Naive thymus-derived CD4-positive, alpha-beta T cell (primary cell): ENCODE measurements at regions of chr7 and their contacts with region 1.

Region 1: DNA sequence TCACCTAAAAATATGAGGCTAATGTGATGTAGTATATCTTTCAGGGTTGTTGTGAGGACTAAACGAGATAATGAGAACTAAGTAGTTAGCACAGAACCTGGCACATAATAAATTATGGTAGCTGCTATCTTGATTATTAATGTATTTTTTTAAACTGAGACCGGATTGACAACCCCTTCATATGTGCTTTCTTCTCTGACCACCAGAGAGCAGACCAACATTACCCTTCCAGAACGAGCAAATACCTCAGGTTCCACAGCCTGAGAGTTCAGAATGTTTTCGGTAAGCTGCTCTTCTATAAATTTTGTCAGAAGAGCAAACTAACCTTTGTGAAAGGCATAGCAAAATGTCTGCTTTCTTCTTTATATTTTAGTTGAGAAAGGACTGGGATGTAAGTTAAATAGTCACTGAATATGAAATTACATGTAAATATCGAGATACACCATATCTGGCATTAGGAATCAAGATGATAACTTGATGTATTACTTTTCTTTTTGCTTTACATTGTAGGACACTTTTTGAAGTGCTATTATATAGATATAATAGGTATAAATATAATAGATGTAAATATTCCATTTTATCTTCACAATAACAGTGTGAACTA is 13.6 kb upstream of the BPGM start:
- DNase-seq: peak in 7 of 9 donors; percentile 51 to 75 (median 64)
- ATAC-seq: peak; percentile 89
- H3K4me3 ChIP-seq: no peak overlapping the region
- H3K4me3 Mint-ChIP-seq: no peak overlapping the region
- H3K27ac ChIP-seq: no peak overlapping the region
- H3K27ac Mint-ChIP-seq: peak overlapping the region in 1 of 9 donors; percentile 1
- H3K4me1 ChIP-seq: peaks cover 12% of the 10 kb centered on the region in 2 donors
- H3K4me1 Mint-ChIP-seq: peaks cover 17 to 35% (median 23%) of the 10 kb centered on the region in 7 donors
- H3K27me3 ChIP-seq: peaks cover 0 to 5% of the 10 kb centered on the region in 2 donors
- H3K27me3 Mint-ChIP-seq: peaks cover 6 to 19% (median 12%) of the 10 kb centered on the region in 5 donors

Region 2: DNA sequence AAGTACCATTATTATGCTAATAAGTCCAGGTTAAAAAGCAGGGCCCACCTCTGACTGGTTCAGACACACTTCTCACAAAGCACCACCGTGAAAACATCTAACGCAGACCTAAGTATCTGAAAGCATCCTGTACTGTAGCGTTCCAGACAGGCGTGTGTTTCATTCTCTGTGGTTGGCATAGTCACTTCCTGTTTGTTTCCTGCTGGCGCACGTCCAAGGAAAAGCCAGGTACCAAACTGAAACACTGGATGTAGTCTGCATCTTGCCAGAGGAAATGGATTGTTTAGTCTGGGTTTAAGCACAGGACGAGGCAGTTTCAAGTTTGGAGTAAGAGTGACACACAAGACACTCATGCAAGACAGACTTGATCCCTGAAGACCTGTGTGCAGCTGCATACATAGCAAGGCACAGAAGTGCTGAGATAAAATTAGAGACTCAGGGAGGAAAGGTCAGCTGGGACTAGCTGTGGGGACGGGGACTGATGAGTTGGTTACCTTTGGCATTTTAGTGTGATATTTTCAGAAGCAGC is 36.9 kb after region 1 on chr7:
- CTCF ChIA-PET with region 1: interaction called, 10 read pairs
- POLR2A ChIA-PET with region 1: interaction called, 13 read pairs
- intact Hi-C with region 1: loop called (anchors 1 to 5 kb)
- DNase-seq: peak; percentile 41 to 95 (median 92)
- ATAC-seq: peak; percentile 98
- H3K4me3 ChIP-seq: peak overlapping the region; percentile 25
- H3K4me3 Mint-ChIP-seq: peak overlapping the region; percentile 58 to 88 (median 82)
- H3K27ac ChIP-seq: peak overlapping the region; percentile 84
- H3K27ac Mint-ChIP-seq: peak overlapping the region; percentile 79 to 100 (median 96)
- H3K4me1 ChIP-seq: peaks cover 13 to 38% of the 10 kb centered on the region in 2 donors
- H3K4me1 Mint-ChIP-seq: peaks cover 14 to 69% (median 63%) of the 10 kb centered on the region in 7 donors
- H3K27me3 ChIP-seq: no peaks in the 10 kb centered on the region
- H3K27me3 Mint-ChIP-seq: no peaks in the 10 kb centered on the region

Region 3: GRCh38 chr7:134701272-134701671 is 68.2 kb after region 1 on chr7:
- CTCF ChIA-PET with region 1: interaction called, 90 read pairs
- POLR2A ChIA-PET with region 1: interaction called, 8 read pairs
- intact Hi-C with region 1: loop called (anchors 1 kb)
- DNase-seq: peak in 6 of 9 donors; percentile 10 to 39 (median 23)
- ATAC-seq: peak; percentile 60
- H3K4me3 ChIP-seq: no peak overlapping the region
- H3K4me3 Mint-ChIP-seq: no peak overlapping the region
- H3K27ac ChIP-seq: no peak overlapping the region
- H3K27ac Mint-ChIP-seq: peak overlapping the region in 1 of 9 donors; percentile 25
- H3K4me1 ChIP-seq: no peaks in the 10 kb centered on the region
- H3K4me1 Mint-ChIP-seq: no peaks in the 10 kb centered on the region
- H3K27me3 ChIP-seq: no peaks in the 10 kb centered on the region
- H3K27me3 Mint-ChIP-seq: peaks cover 0 to 2% (median 0%) of the 10 kb centered on the region in 5 donors

Region 4: DNA sequence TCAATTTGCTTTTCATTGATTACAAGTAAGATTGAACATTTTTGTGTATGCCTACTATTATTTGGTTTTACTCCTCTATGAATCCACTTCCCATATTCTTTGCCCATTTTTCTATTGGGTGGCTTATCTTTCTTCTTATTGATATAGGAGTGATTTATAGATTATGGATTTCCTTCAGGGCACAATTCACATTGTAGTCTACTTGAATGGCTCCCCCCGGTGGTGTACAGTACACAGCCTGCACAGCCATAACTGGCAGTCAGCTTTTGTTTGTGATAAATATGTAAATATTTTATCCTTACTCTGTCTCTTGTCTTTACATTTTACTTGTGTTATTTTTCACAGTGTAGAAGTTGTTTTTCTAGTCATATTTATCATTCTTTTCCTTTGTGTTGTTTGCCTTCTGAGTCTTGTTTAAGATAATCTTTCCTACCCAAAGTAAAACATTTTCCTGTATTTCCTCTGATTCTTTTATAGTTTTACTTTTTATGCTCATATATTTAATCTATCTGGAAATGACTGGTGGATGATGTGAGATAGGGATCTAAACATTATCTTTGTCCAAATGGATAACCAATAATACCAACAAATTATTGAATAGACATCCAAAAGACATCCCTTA is 122.5 kb after region 1 on chr7:
- CTCF ChIA-PET with region 1: interaction called, 86 read pairs
- POLR2A ChIA-PET with region 1: interaction called, 3 read pairs
- intact Hi-C with region 1: loop called (anchors 1 kb)
- DNase-seq: peak in 6 of 9 donors; percentile 8 to 38 (median 29)
- ATAC-seq: peak; percentile 38
- H3K4me3 ChIP-seq: no peak overlapping the region
- H3K4me3 Mint-ChIP-seq: no peak overlapping the region
- H3K27ac ChIP-seq: no peak overlapping the region
- H3K27ac Mint-ChIP-seq: peak overlapping the region in 1 of 9 donors; percentile 60
- H3K4me1 ChIP-seq: no peaks in the 10 kb centered on the region
- H3K4me1 Mint-ChIP-seq: peaks cover 2 to 10% (median 10%) of the 10 kb centered on the region in 7 donors
- H3K27me3 ChIP-seq: no peaks in the 10 kb centered on the region
- H3K27me3 Mint-ChIP-seq: no peaks in the 10 kb centered on the region

Region 5: DNA sequence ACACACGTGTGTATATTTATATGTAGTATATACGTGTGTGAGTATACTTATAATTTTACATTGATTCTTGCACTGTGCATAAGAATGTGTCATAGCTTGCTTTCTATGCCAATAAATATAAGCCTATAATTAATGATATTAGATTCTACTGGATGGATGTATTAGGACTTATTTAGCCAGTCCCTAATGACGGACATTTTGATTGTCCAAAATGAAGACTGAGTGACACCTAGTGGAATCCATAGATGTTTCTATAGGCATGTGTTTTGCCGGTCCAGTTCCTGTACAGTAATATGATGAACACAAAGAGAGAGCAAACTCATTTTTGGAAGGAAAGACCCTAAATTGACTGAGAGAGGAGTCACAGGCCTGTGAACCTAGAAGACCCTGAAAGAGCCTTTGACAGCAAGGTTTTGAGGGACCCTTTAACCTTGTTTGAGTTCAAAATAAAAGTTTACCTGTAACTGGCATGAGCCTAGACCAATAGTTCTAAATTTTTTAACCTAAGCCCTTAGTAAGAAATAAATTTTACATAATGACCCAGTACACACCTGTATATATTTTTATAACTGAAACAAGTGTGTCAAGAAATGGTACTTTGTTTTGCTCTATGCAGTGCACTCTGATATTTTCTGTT is 310.8 kb after region 1 on chr7:
- CTCF ChIA-PET with region 1: interaction called, 23 read pairs
- POLR2A ChIA-PET with region 1: interaction called, 3 read pairs
- intact Hi-C with region 1: no loop called
- DNase-seq: no peak
- ATAC-seq: no peak
- H3K4me3 ChIP-seq: no peak overlapping the region
- H3K4me3 Mint-ChIP-seq: no peak overlapping the region
- H3K27ac ChIP-seq: no peak overlapping the region
- H3K27ac Mint-ChIP-seq: peak overlapping the region in 1 of 9 donors; percentile 20
- H3K4me1 ChIP-seq: peaks cover 0 to 13% of the 10 kb centered on the region in 2 donors
- H3K4me1 Mint-ChIP-seq: peaks cover 7 to 33% (median 22%) of the 10 kb centered on the region in 7 donors
- H3K27me3 ChIP-seq: no peaks in the 10 kb centered on the region
- H3K27me3 Mint-ChIP-seq: peaks cover 0 to 4% (median 0%) of the 10 kb centered on the region in 5 donors

Region 6: DNA sequence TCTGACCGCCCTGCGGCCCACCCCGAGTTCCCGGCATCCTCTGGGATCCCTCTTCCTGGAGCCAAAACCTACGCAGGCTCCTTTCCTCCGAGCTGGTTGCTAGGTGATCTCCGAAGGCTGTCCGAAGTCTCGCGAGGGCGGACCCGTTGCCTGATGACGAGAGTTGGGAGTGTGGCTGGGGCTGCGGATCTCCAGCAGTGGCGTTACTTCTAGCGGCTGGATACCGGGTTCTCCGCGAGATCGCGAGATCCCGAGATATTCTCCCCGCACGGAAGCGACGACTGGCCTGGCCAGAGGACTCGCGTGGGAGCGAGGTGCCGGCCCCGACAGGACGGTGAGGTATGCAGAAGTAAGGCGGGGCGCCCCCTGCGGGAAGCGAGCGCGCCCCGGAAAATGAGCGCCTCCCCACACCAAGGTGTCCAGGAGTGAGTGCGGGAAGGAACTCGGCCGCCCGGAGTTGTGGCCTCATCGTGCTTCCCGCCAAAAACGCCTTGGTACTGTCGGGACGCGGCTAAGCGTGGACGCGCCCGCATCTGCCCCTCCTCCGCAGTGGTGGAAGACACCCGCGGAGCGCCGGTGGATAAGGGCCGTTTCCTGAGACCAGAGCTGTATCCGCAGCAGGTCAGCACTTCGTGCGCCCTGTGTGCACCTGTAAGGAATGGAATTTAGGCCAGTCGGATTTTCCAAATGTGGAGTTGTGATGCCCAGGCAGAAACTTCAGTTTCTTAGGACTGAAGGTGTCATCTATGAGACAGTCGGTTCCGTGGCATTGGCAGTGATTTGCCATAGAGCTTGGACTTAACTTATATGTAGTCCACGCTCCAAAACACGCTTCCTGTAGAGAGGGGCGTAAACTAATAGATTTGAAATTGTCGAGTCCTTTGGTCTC is 353.6 kb after region 1 on chr7 and contains the start of gene AGBL3:
- CTCF ChIA-PET with region 1: interaction called, 8 read pairs
- POLR2A ChIA-PET with region 1: interaction called, 9 read pairs
- intact Hi-C with region 1: loop called (anchors 1 kb)
- DNase-seq: peak; percentile 80 to 92 (median 89)
- ATAC-seq: peak; percentile 94
- H3K4me3 ChIP-seq: peak within 1 kb of the TSS; percentile 92
- H3K4me3 Mint-ChIP-seq: peak within 1 kb of the TSS; percentile 93 to 100 (median 98)
- H3K27ac ChIP-seq: peak within 1 kb of the TSS; percentile 96
- H3K27ac Mint-ChIP-seq: peak within 1 kb of the TSS; percentile 97 to 100 (median 99)
- H3K4me1 ChIP-seq: no peaks in the 10 kb centered on the region
- H3K4me1 Mint-ChIP-seq: peaks cover 20 to 61% (median 52%) of the 10 kb centered on the region in 7 donors
- H3K27me3 ChIP-seq: no peaks in the 10 kb centered on the region
- H3K27me3 Mint-ChIP-seq: no peaks in the 10 kb centered on the region
- total RNA-seq, gene AGBL3: 2.1 to 6.6 (median 3.8) TPM